ENCODE measurements at regions of chr4 and their contacts with region 1.

Region 1: GRCh38 chr4:56757821-56758411 is 63.6 kb downstream of the SPINK2 start:
- DNase-seq: peak; percentile 70
- H3K4me3 Mint-ChIP-seq: peak overlapping the region; percentile 61
- H3K27ac Mint-ChIP-seq: peak overlapping the region; percentile 95
- H3K4me1 Mint-ChIP-seq: peaks cover 47% of the 10 kb centered on the region
- H3K27me3 Mint-ChIP-seq: peaks cover 11% of the 10 kb centered on the region

Region 2: DNA sequence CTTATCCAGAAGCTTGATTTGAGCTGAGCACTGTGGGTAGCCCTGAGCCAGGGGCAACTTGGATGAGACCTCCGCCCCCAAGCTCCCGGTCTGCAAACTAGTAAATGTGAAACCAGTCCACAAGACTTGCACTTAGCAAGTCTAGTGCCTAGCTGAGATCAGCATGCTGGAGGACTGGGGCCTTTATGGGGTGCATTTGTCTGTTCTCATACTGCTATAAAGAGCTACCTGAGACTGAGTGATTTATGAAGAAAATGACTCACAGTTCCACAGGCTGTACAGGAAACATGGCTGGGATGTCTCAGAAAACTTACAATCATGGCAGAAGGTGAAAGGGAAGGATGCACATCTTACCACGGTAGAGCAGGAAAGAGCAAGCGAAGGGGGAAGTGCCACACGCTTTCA is 34.7 kb before region 1 on chr4:
- intact Hi-C with region 1: loop called (anchors 5 kb)
- DNase-seq: no peak
- H3K4me3 Mint-ChIP-seq: no peak overlapping the region
- H3K27ac Mint-ChIP-seq: peak overlapping the region; percentile 55
- H3K4me1 Mint-ChIP-seq: peaks cover 11% of the 10 kb centered on the region
- H3K27me3 Mint-ChIP-seq: peaks cover 2% of the 10 kb centered on the region

Region 3: DNA sequence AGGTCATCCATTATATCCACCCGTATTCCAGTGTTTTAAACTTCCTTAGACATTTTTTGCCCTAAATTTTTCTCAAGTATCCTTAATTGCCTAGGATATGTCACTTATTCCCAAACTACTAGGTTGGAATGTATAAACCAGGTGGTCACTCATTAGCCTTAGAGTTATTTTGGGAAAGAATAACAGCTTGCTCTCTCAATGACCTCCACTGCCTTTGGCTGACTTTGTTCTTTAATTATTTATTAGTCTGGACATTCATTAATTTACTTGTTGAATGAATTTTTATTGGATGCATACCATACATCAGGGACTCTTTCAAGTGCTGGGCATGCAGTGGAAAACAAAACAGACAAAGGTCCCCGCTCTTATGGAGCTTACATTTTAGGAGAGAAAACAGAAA is 961.5 kb after region 1 on chr4:
- intact Hi-C with region 1: no loop called
- DNase-seq: no peak
- H3K4me3 Mint-ChIP-seq: no peak overlapping the region
- H3K27ac Mint-ChIP-seq: no peak overlapping the region
- H3K4me1 Mint-ChIP-seq: no peaks in the 10 kb centered on the region
- H3K27me3 Mint-ChIP-seq: no peaks in the 10 kb centered on the region